PC-3 (cell line): ENCODE measurements at regions of chr11 and their contacts with region 1.

Region 1: GRCh38 chr11:58513747-58514367 is 6.0 kb upstream of the OR5B21 start:
- DNase-seq: peak; percentile 92
- ATAC-seq: peak; percentile 98
- H3K4me3 ChIP-seq: no peak overlapping the region
- H3K27ac ChIP-seq: no peak overlapping the region
- H3K4me1 ChIP-seq: peaks cover 6% of the 10 kb centered on the region; the same call in 1 of the 2 replicates
- H3K27me3 ChIP-seq: no peaks in the 10 kb centered on the region
- CTCF ChIP-seq: peak; percentile 97

Region 2: GRCh38 chr11:57823859-57824258 is 690.0 kb before region 1 on chr11:
- CTCF ChIA-PET with region 1: no interaction called
- POLR2A ChIA-PET with region 1: no interaction called
- intact Hi-C with region 1: loop called (anchors 5 kb)
- DNase-seq: no peak
- ATAC-seq: no peak
- H3K4me3 ChIP-seq: no peak overlapping the region
- H3K27ac ChIP-seq: no peak overlapping the region
- H3K4me1 ChIP-seq: no peaks in the 10 kb centered on the region
- H3K27me3 ChIP-seq: no peaks in the 10 kb centered on the region
- CTCF ChIP-seq: no peak

Region 3: DNA sequence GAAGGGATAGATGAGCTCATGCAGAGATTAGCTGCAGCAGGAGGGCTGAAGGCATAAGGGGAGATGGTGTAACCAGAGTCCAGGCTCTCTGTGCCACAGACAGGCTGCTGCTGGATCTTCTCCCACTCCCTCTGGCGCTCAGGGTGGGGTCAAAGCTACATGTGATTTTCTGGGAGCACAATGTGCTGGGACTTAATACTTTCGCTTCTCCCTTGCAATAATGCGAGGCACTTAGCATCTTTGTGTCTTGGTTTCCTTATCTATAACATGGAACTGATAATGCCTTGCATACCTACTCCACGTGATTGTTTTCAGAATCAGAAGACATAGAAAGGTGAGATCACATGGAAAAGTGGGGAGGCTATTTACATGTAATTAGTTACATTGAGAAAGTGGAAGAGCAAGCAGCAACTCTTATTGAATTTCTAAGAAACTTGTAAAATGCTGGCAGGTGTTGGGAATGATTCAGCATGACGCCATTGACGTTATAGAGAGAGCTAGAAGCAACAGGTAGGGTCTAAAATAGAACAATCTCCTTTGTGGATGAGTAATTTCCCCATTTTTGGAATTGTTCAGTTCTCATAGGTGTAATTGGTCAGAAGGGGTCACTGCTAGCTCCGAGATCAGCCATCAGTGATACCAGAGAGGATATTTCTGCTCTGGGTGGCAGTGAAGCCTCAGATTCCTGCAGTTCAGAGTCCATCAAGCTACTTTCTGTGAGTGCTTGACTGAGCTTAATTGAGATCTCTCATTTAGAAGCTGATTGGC is 380.4 kb before region 1 on chr11:
- CTCF ChIA-PET with region 1: interaction called, 3 read pairs
- POLR2A ChIA-PET with region 1: no interaction called
- intact Hi-C with region 1: loop called (anchors 5 kb)
- DNase-seq: peak; percentile 80
- ATAC-seq: peak; percentile 51
- H3K4me3 ChIP-seq: no peak overlapping the region
- H3K27ac ChIP-seq: no peak overlapping the region
- H3K4me1 ChIP-seq: peaks cover 10% of the 10 kb centered on the region; the same call in 1 of the 2 replicates
- H3K27me3 ChIP-seq: peaks cover 7% of the 10 kb centered on the region; the same call in 1 of the 2 replicates
- CTCF ChIP-seq: peak; percentile 47

Region 4: DNA sequence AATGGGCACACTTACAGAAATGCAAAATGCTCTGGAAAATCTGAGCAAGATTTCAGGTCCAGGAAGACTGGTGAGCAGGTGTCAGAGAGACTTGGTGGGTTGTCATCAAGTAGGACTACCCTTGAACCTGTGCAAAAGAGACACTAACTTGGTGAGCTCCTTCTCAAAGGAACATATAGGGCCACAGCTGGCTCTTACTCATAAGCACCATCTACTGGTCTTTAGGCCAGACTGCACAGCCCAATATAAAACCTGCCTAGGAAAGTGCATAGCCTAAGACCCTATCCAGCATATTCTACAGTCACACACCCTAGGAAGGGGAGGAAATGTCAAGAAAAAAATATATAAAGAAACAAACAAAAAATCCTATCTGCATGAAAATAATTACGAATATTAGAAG is 227.6 kb before region 1 on chr11:
- CTCF ChIA-PET with region 1: interaction called, 4 read pairs
- POLR2A ChIA-PET with region 1: no interaction called
- intact Hi-C with region 1: loop called (anchors 10 kb)
- DNase-seq: peak; percentile 66
- ATAC-seq: peak; percentile 99
- H3K4me3 ChIP-seq: no peak overlapping the region
- H3K27ac ChIP-seq: no peak overlapping the region
- H3K4me1 ChIP-seq: peaks cover 8% of the 10 kb centered on the region; the same call in 1 of the 2 replicates
- H3K27me3 ChIP-seq: no peaks in the 10 kb centered on the region
- CTCF ChIP-seq: peak; percentile 87

Region 5: DNA sequence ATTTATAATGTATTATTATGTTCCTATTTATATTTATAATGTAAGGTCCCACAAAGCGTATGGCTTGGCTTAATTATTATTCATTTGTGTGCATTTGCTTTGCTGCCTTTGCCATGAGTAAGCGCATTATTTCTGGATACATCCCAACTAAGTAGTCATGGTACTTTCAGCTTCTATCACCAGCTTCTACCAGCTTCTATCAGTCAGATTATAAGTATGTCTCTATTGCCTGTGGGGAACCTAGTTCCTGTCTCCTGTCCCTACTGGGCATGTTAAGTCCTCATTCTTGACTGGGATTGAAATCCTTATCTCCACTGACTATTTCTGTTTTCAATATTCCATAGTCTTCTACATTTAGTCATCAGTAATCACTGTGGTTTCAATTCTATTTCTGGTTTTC is 212.3 kb before region 1 on chr11:
- CTCF ChIA-PET with region 1: no interaction called
- POLR2A ChIA-PET with region 1: no interaction called
- intact Hi-C with region 1: no loop called
- DNase-seq: peak; percentile 85
- ATAC-seq: peak; percentile 87
- H3K4me3 ChIP-seq: no peak overlapping the region
- H3K27ac ChIP-seq: no peak overlapping the region
- H3K4me1 ChIP-seq: peaks cover 8% of the 10 kb centered on the region; the same call in 1 of the 2 replicates
- H3K27me3 ChIP-seq: no peaks in the 10 kb centered on the region
- CTCF ChIP-seq: no peak

Region 6: DNA sequence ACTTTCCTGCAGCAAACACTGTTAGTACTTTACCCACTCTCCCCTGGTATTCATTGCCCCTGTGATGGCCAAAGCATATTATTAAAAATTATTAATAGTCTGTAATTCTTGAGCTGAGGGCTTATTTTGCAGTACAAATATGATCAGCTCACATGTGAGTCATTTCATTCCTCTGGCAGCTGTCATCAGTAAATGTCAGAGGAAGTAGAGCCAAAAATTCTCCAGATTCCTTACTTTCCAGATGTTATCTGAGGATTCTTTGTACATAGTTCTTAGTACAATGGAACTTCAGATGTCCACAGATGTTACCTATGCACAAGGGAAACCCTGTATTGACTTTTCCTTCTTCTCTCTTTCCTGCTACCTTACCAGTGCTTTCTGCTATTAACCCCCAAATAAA is 119.7 kb before region 1 on chr11:
- CTCF ChIA-PET with region 1: no interaction called
- POLR2A ChIA-PET with region 1: interaction called, 4 read pairs
- intact Hi-C with region 1: loop called (anchors 1 kb)
- DNase-seq: peak; percentile 99
- ATAC-seq: peak; percentile 65
- H3K4me3 ChIP-seq: peak overlapping the region; percentile 36; the same call in 1 of the 2 replicates
- H3K27ac ChIP-seq: peak overlapping the region; percentile 89
- H3K4me1 ChIP-seq: peaks cover 55% of the 10 kb centered on the region
- H3K27me3 ChIP-seq: no peaks in the 10 kb centered on the region
- CTCF ChIP-seq: no peak

Region 7: GRCh38 chr11:58546841-58547240 is 33.0 kb after region 1 on chr11:
- CTCF ChIA-PET with region 1: no interaction called
- POLR2A ChIA-PET with region 1: no interaction called
- intact Hi-C with region 1: no loop called
- DNase-seq: no peak
- ATAC-seq: no peak
- H3K4me3 ChIP-seq: no peak overlapping the region
- H3K27ac ChIP-seq: no peak overlapping the region
- H3K4me1 ChIP-seq: no peaks in the 10 kb centered on the region
- H3K27me3 ChIP-seq: no peaks in the 10 kb centered on the region
- CTCF ChIP-seq: no peak

Region 8: DNA sequence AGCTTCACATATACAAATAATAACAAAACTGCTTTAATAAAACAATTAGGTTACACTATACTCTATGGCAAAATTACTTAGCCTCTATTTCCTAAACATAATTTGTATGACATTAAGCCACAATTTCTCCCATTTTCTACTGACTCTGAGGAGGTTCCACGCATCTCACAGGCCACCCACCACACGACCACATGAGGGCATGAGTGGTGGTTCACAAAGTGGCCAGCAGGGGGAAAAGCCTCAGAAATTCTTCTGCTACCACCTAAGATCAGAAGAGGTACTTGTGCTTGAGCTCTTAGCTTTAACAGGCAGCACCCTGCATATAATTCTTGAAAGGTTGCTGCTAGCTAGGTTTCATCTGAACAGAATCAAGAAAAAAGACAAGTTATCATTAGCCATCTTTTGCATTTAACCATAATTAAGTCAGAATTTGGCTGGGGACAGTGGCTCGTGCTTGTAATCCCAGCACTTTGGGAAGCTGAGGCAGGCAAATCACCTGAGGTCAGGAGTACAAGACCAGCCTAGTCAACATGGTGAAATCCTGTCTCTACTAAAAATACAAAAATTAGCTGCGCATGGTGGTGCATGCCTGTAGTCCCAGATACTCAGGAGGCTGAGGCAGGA is 54.1 kb after region 1 on chr11:
- CTCF ChIA-PET with region 1: no interaction called
- POLR2A ChIA-PET with region 1: no interaction called
- intact Hi-C with region 1: no loop called
- DNase-seq: peak; percentile 87
- ATAC-seq: peak; percentile 94
- H3K4me3 ChIP-seq: no peak overlapping the region
- H3K27ac ChIP-seq: no peak overlapping the region
- H3K4me1 ChIP-seq: peaks cover 17% of the 10 kb centered on the region
- H3K27me3 ChIP-seq: no peaks in the 10 kb centered on the region
- CTCF ChIP-seq: peak; percentile 93

Region 9: GRCh38 chr11:60145677-60146076 is 1631.8 kb after region 1 on chr11:
- CTCF ChIA-PET with region 1: no interaction called
- POLR2A ChIA-PET with region 1: no interaction called
- intact Hi-C with region 1: no loop called
- DNase-seq: no peak
- ATAC-seq: no peak
- H3K4me3 ChIP-seq: no peak overlapping the region
- H3K27ac ChIP-seq: no peak overlapping the region
- H3K4me1 ChIP-seq: no peaks in the 10 kb centered on the region
- H3K27me3 ChIP-seq: no peaks in the 10 kb centered on the region
- CTCF ChIP-seq: no peak